CD8-positive, alpha-beta T cell (primary cell): ENCODE measurements at regions of chr10 and their contacts with region 1.

Region 1: GRCh38 chr10:69179743-69180524 is at the start of gene SUPV3L1:
- DNase-seq: peak; percentile 71 to 96 (median 87)
- ATAC-seq: peak; percentile 70
- H3K4me3 ChIP-seq: peak within 1 kb of the TSS; percentile 88 to 90
- H3K4me3 Mint-ChIP-seq: peak within 1 kb of the TSS; percentile 91
- H3K27ac ChIP-seq: peak within 1 kb of the TSS; percentile 97 to 98
- H3K27ac Mint-ChIP-seq: peak within 1 kb of the TSS; percentile 99
- H3K4me1 ChIP-seq: peaks cover 24% of the 10 kb centered on the region
- H3K4me1 Mint-ChIP-seq: peaks cover 41% of the 10 kb centered on the region
- H3K27me3 ChIP-seq: no peaks in the 10 kb centered on the region
- H3K27me3 Mint-ChIP-seq: no peaks in the 10 kb centered on the region
- CTCF ChIP-seq: no peak
- total RNA-seq, gene SUPV3L1: 89.3 to 99.6 TPM

Region 2: GRCh38 chr10:68720793-68721672 is 458.9 kb before region 1 on chr10 and contains the start of gene CCAR1:
- CTCF ChIA-PET with region 1: no interaction called
- POLR2A ChIA-PET with region 1: no interaction called
- intact Hi-C with region 1: loop called in 1 of 2 experiments (anchors 10 kb)
- DNase-seq: peak; percentile 92 to 99 (median 97)
- ATAC-seq: peak; percentile 95
- H3K4me3 ChIP-seq: peak within 1 kb of the TSS; percentile 87 to 98
- H3K4me3 Mint-ChIP-seq: peak within 1 kb of the TSS; percentile 100
- H3K27ac ChIP-seq: peak within 1 kb of the TSS; percentile 83 to 95
- H3K27ac Mint-ChIP-seq: peak within 1 kb of the TSS; percentile 99
- H3K4me1 ChIP-seq: peaks cover 10% of the 10 kb centered on the region
- H3K4me1 Mint-ChIP-seq: peaks cover 20% of the 10 kb centered on the region
- H3K27me3 ChIP-seq: no peaks in the 10 kb centered on the region
- H3K27me3 Mint-ChIP-seq: no peaks in the 10 kb centered on the region
- CTCF ChIP-seq: no peak
- total RNA-seq, gene CCAR1: 70.8 to 79.1 TPM

Region 3: GRCh38 chr10:69087590-69088470 is 92.1 kb before region 1 on chr10 and contains the start of gene SRGN:
- CTCF ChIA-PET with region 1: no interaction called
- POLR2A ChIA-PET with region 1: interaction called, 3 read pairs
- intact Hi-C with region 1: loop called in 1 of 2 experiments (anchors 1 kb)
- DNase-seq: peak; percentile 57 to 96 (median 76)
- ATAC-seq: peak; percentile 57
- H3K4me3 ChIP-seq: peak within 1 kb of the TSS; percentile 62 to 89
- H3K4me3 Mint-ChIP-seq: peak within 1 kb of the TSS; percentile 95
- H3K27ac ChIP-seq: peak within 1 kb of the TSS; percentile 97
- H3K27ac Mint-ChIP-seq: peak within 1 kb of the TSS; percentile 99
- H3K4me1 ChIP-seq: peaks cover 41% of the 10 kb centered on the region
- H3K4me1 Mint-ChIP-seq: peaks cover 57% of the 10 kb centered on the region
- H3K27me3 ChIP-seq: no peaks in the 10 kb centered on the region
- H3K27me3 Mint-ChIP-seq: no peaks in the 10 kb centered on the region
- CTCF ChIP-seq: no peak
- total RNA-seq, gene SRGN: 570 to 583 TPM

Region 4: DNA sequence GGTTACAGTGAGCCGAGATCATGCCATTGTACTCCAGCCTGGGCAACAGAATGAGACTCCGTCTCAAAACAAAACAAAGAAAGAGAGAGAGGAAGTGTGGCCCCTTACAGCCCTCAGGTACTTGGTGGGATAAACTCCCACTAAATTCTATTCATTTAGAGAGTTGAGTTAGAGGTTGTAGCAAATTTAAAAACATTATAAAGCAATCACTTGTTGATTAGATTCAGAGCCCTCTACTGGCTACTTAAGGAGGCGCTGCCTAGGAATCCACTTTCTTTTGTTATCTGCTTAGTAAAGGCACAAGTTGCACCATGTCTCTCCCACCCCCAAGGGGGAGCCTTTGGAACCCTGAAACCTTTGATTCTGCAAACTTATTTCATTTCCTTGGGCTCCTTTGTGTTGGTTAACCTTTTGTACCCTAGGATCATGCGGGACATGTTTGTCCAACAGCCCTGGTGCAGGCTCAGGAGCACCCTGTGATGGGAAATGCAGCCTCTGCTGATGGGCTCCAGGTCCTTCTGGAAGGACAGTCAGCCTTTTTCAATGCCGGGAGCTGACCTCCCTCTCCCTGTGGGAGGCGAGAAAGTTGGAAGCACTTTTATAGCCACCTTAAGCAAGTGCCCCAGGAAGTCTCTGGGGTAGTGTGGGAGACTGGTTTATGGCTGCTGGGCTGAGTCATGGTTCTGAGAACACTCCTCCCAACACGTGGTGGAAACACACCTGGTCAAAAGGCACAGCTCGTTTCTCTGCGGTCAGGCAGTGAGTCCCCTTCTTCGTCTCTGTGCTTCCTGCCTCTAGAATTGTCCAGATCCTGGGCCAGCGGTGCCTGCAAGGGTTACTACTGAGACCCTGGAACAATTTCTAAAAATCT is 42.5 kb after region 1 on chr10:
- CTCF ChIA-PET with region 1: no interaction called
- POLR2A ChIA-PET with region 1: no interaction called
- intact Hi-C with region 1: loop called (anchors 1 to 5 kb)
- DNase-seq: peak in 8 of 9 experiments; percentile 36 to 83 (median 68)
- ATAC-seq: peak; percentile 84
- H3K4me3 ChIP-seq: peak overlapping the region in 1 of 2 experiments; percentile 39
- H3K4me3 Mint-ChIP-seq: peak overlapping the region; percentile 57
- H3K27ac ChIP-seq: peak overlapping the region in 1 of 2 experiments; percentile 60
- H3K27ac Mint-ChIP-seq: peak overlapping the region; percentile 73
- H3K4me1 ChIP-seq: peaks cover 20% of the 10 kb centered on the region
- H3K4me1 Mint-ChIP-seq: peaks cover 32% of the 10 kb centered on the region
- H3K27me3 ChIP-seq: no peaks in the 10 kb centered on the region
- H3K27me3 Mint-ChIP-seq: no peaks in the 10 kb centered on the region
- CTCF ChIP-seq: peak; percentile 87

Region 5: GRCh38 chr10:69318106-69318866 is 138.4 kb after region 1 on chr10:
- CTCF ChIA-PET with region 1: no interaction called
- POLR2A ChIA-PET with region 1: no interaction called
- intact Hi-C with region 1: loop called in 1 of 2 experiments (anchors 2 kb)
- DNase-seq: peak; percentile 81 to 96 (median 90)
- ATAC-seq: peak; percentile 89
- H3K4me3 ChIP-seq: peak overlapping the region; percentile 92 to 99
- H3K4me3 Mint-ChIP-seq: peak overlapping the region; percentile 95
- H3K27ac ChIP-seq: peak overlapping the region; percentile 89 to 92
- H3K27ac Mint-ChIP-seq: peak overlapping the region; percentile 89
- H3K4me1 ChIP-seq: peaks cover 32% of the 10 kb centered on the region
- H3K4me1 Mint-ChIP-seq: peaks cover 38% of the 10 kb centered on the region
- H3K27me3 ChIP-seq: no peaks in the 10 kb centered on the region
- H3K27me3 Mint-ChIP-seq: no peaks in the 10 kb centered on the region
- CTCF ChIP-seq: no peak